Prostate gland (tissue), 2 donors: ENCODE measurements at regions of chr4 and their contacts with region 1.

Region 1: DNA sequence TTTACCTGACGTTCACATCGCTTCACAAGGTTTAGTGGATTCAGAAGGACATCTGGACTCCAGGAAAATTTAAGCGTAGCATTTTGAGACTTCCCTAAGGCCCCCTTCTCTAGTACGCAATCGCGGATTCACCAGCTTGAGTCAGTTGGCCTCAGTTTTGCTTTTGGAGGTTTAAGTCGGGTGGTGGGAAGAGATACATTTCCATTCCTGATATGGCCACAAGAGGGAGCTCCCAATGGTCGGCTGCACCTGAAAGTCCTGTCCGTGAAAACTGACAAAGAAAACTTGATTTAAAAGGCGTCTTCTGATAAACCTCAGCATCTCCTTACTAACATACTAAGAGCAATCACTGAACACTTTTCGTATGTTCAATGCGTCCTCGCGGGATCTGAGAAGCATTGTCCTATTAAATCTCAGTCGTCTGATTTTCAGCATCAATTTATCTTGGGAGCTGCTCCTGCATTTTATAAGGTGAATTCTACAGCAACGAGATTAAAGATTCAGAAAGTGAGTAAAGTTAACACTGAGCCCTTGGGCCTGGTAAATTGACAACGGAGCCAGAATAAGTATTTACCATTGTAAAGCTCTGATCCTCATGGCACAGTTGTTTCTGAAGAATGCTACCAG is 50.6 kb downstream of the LGI2 start:
- DNase-seq: peak; percentile 46
- H3K4me3 ChIP-seq: no peak overlapping the region
- H3K27ac ChIP-seq: peak overlapping the region in 1 of 2 donors; percentile 13
- H3K4me1 ChIP-seq: no peaks in the 10 kb centered on the region
- H3K27me3 ChIP-seq: no peaks in the 10 kb centered on the region
- CTCF ChIP-seq: peak; percentile 64 to 83 (median 76)
- POLR2A ChIP-seq: no peak

Region 2: GRCh38 chr4:25144870-25145481 is 164.8 kb after region 1 on chr4:
- intact Hi-C with region 1: loop called (anchors 2 kb)
- DNase-seq: no peak
- H3K4me3 ChIP-seq: no peak overlapping the region
- H3K27ac ChIP-seq: no peak overlapping the region
- H3K4me1 ChIP-seq: no peaks in the 10 kb centered on the region
- H3K27me3 ChIP-seq: no peaks in the 10 kb centered on the region
- CTCF ChIP-seq: peak; percentile 10 to 61 (median 44)
- POLR2A ChIP-seq: no peak